ENCODE measurements at regions of chr6 and their contacts with region 1.

Region 1: GRCh38 chr6:29737707-29738630 is 14.7 kb downstream of the HLA-F start:
- DNase-seq: peak; percentile 62
- H3K4me3 ChIP-seq: no peak overlapping the region
- H3K27ac ChIP-seq: no peak overlapping the region
- H3K4me1 ChIP-seq: no peaks in the 10 kb centered on the region
- H3K27me3 ChIP-seq: no peaks in the 10 kb centered on the region
- CTCF ChIP-seq: peak; percentile 72 to 85
- POLR2A ChIP-seq: no peak

Region 2: DNA sequence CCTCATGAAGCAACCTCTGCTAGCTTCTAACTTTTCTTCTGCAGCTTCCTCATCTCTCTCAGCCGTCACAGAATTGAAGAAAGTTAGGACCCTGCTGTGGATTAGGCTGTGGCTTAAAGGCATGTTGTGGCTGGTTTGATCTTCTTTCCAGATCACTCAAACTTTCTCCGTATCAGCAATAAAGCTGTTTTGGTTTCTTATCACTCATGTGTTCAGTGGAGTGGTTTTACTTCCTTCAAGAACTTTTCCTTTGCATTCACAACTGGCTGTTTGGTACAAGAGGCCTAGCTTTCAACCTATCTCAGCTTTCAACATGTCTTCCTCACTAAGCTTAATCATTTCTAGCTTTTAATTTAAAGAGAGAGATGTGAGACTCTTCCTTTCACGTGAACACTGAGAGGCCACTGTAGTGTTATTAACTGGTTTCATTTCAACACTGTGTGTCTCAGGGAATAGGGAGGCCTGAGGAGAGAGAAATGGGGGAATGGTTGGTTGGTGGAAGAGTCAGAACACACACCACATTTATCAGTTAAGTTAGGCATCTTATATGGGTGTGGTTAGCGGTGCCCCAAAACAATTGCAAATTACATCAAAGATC is 1311.9 kb before region 1 on chr6:
- CTCF ChIA-PET with region 1: no interaction called
- POLR2A ChIA-PET with region 1: no interaction called
- dilution Hi-C with region 1: no loop called
- intact Hi-C with region 1: no loop called
- DNase-seq: no peak
- H3K4me3 ChIP-seq: no peak overlapping the region
- H3K27ac ChIP-seq: no peak overlapping the region
- H3K4me1 ChIP-seq: no peaks in the 10 kb centered on the region
- H3K27me3 ChIP-seq: peaks cover 0 to 3% of the 10 kb centered on the region in 2 experiments
- CTCF ChIP-seq: no peak
- POLR2A ChIP-seq: no peak

Region 3: GRCh38 chr6:29705389-29706231 is 32.4 kb before region 1 on chr6:
- CTCF ChIA-PET with region 1: interaction called, 11 read pairs
- POLR2A ChIA-PET with region 1: no interaction called
- dilution Hi-C with region 1: no loop called
- intact Hi-C with region 1: loop called (anchors 2 kb)
- DNase-seq: peak; percentile 39
- H3K4me3 ChIP-seq: no peak overlapping the region
- H3K27ac ChIP-seq: no peak overlapping the region
- H3K4me1 ChIP-seq: no peaks in the 10 kb centered on the region
- H3K27me3 ChIP-seq: peaks cover 7 to 8% of the 10 kb centered on the region in 2 experiments
- CTCF ChIP-seq: peak; percentile 36 to 40
- POLR2A ChIP-seq: no peak

Region 4: GRCh38 chr6:29752451-29753308 is 14.7 kb after region 1 on chr6:
- CTCF ChIA-PET with region 1: interaction called, 33 read pairs
- POLR2A ChIA-PET with region 1: no interaction called
- dilution Hi-C with region 1: no loop called
- intact Hi-C with region 1: loop called (anchors 1 kb)
- DNase-seq: peak; percentile 92
- H3K4me3 ChIP-seq: peak overlapping the region; percentile 48 to 96 (median 82)
- H3K27ac ChIP-seq: peak overlapping the region; percentile 76
- H3K4me1 ChIP-seq: peaks cover 21% of the 10 kb centered on the region
- H3K27me3 ChIP-seq: peaks cover 8 to 26% of the 10 kb centered on the region in 2 experiments
- CTCF ChIP-seq: peak; percentile 99 to 100
- POLR2A ChIP-seq: peak; percentile 47

Region 5: DNA sequence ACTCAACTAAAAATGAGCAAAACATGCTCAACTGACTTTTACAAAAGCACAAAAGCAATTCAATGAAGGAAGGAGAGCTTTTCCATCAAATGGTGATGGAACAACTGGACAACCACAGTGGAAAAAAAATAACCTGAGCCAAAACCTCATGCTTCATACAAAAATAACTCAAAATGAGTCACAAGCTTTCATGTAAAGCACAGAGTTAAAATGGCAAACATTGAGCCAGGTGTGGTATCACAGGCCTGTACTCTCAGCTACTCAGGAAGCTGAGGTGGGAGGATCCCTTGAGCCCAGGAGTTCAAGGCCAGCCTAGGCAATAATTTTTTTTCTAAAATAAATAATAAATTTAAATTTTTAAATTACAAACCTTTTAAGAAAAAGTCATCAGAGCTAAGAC is 71.3 kb after region 1 on chr6:
- CTCF ChIA-PET with region 1: interaction called, 13 read pairs
- POLR2A ChIA-PET with region 1: no interaction called
- dilution Hi-C with region 1: no loop called
- intact Hi-C with region 1: no loop called
- DNase-seq: no peak
- H3K4me3 ChIP-seq: no peak overlapping the region
- H3K27ac ChIP-seq: no peak overlapping the region
- H3K4me1 ChIP-seq: no peaks in the 10 kb centered on the region
- H3K27me3 ChIP-seq: peaks cover 6 to 25% of the 10 kb centered on the region in 2 experiments
- CTCF ChIP-seq: no peak
- POLR2A ChIP-seq: no peak

Region 6: DNA sequence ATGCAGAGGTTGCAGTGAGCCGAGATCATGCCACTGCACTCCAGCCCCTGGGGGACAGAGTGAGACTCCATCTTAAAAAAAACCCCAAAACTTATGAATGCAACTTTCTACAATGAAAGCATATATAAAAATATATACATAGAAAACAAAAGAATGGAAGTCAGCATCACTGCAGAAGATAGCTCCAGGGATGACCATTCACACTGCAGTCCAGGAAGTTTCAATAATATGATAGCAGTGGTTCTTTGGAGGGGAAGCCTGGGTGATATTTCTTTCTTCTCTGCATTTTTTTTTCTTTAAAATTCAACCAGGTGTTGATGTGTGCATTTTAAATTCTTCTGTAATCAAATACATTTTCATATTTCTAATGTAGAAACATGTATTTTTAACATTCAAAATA is 101.9 kb after region 1 on chr6:
- CTCF ChIA-PET with region 1: interaction called, 145 read pairs
- POLR2A ChIA-PET with region 1: no interaction called
- dilution Hi-C with region 1: no loop called
- intact Hi-C with region 1: loop called (anchors 1 kb)
- DNase-seq: no peak
- H3K4me3 ChIP-seq: no peak overlapping the region
- H3K27ac ChIP-seq: no peak overlapping the region
- H3K4me1 ChIP-seq: no peaks in the 10 kb centered on the region
- H3K27me3 ChIP-seq: peaks cover 20 to 43% of the 10 kb centered on the region in 2 experiments
- CTCF ChIP-seq: no peak
- POLR2A ChIP-seq: no peak